GM12878 (cell line): ENCODE measurements at regions of chr21 and their contacts with region 1.

Region 1: DNA sequence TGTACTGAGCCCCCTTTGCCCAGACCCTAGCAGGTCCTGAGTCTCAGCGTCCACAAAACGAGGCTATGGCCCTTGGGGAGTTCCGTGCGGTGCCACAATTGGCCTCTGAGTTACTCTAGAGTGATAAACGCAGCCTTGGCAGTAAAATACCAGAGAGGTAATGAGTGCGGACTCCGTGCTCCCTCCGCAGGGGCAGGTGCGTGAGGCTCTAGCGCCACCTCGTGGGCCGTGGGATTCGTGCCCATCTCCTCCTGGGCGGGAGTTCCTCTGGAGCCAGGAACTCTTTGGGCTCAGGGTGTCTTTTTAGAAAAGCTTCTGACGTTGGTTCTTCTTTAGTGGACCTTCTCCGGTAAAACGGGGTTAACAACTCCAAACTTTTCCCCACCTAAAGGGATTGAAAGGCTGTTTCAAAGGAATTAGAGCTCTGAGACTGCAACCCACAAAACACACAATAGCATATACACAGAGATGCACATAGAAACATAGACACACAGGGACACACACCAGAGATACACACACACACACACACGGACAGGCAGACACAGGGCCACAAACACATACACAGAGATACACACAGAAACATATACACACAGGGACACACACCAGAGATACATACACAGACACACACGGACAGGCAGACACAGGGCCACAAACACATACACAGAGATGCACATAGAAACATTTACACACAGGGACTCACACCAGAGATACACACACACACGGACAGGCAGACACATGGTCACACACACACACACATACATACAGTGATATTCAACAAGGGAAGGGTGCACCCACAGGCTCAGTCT is 99.4 kb downstream of the KCNJ15 start:
- DNase-seq: peak; percentile 17
- ATAC-seq: peak; percentile 92
- H3K4me3 ChIP-seq: no peak overlapping the region
- H3K27ac ChIP-seq: no peak overlapping the region
- H3K4me1 ChIP-seq: no peaks in the 10 kb centered on the region; the same call in 1 of the 2 replicates
- H3K27me3 ChIP-seq: no peaks in the 10 kb centered on the region
- CTCF ChIP-seq: peak; percentile 75 to 98 (median 96)
- EP300 ChIP-seq: no peak
- POLR2A ChIP-seq: no peak
- RAD21 ChIP-seq: peak; percentile 93

Region 2: GRCh38 chr21:37700641-37701202 is 655.5 kb before region 1 on chr21:
- CTCF ChIA-PET with region 1: interaction called, 4 read pairs
- POLR2A ChIA-PET with region 1: no interaction called
- RAD21 ChIA-PET with region 1: interaction called, 3 read pairs
- SMC1A ChIA-PET with region 1: interaction called, 4 read pairs
- in situ Hi-C with region 1: loop called (anchors 5 kb)
- intact Hi-C with region 1: no loop called
- DNase-seq: peak; percentile 56
- ATAC-seq: peak; percentile 99
- H3K4me3 ChIP-seq: no peak overlapping the region
- H3K27ac ChIP-seq: no peak overlapping the region
- H3K4me1 ChIP-seq: no peaks in the 10 kb centered on the region; the same call in 1 of the 2 replicates
- H3K27me3 ChIP-seq: peaks cover 0 to 1% of the 10 kb centered on the region in 2 experiments; a peak in 1 of 4 replicates
- CTCF ChIP-seq: peak; percentile 59 to 66 (median 66)
- EP300 ChIP-seq: no peak
- POLR2A ChIP-seq: no peak
- RAD21 ChIP-seq: peak; percentile 62

Region 3: DNA sequence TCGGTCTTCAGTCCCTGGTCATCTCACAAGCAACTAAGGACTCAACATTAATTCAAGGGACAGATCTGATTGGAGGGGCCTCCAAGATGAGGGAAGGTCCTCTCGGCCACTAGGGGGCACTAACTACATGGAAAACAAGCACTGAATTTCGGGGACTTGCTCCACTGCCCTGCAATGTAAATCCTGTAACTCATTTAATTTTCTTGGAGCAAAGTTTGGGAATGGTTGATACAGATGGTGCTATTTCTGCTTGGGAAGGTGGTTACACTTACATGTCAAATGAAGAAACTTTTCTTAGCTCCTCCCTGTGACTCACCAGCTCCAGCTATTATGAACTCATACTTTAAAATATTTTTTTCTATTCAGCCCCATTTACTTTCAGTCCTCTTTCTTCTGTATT is 196.8 kb before region 1 on chr21:
- CTCF ChIA-PET with region 1: interaction called, 164 read pairs
- POLR2A ChIA-PET with region 1: no interaction called
- RAD21 ChIA-PET with region 1: interaction called, 32 read pairs
- SMC1A ChIA-PET with region 1: interaction called, 48 read pairs
- in situ Hi-C with region 1: no loop called
- intact Hi-C with region 1: loop called (anchors 1 kb)
- DNase-seq: peak; percentile 19
- ATAC-seq: peak; percentile 88
- H3K4me3 ChIP-seq: no peak overlapping the region
- H3K27ac ChIP-seq: no peak overlapping the region
- H3K4me1 ChIP-seq: no peaks in the 10 kb centered on the region
- H3K27me3 ChIP-seq: no peaks in the 10 kb centered on the region; a peak in 1 of 4 replicates
- CTCF ChIP-seq: peak; percentile 71 to 78 (median 74)
- EP300 ChIP-seq: no peak
- POLR2A ChIP-seq: no peak
- RAD21 ChIP-seq: peak; percentile 63

Region 4: DNA sequence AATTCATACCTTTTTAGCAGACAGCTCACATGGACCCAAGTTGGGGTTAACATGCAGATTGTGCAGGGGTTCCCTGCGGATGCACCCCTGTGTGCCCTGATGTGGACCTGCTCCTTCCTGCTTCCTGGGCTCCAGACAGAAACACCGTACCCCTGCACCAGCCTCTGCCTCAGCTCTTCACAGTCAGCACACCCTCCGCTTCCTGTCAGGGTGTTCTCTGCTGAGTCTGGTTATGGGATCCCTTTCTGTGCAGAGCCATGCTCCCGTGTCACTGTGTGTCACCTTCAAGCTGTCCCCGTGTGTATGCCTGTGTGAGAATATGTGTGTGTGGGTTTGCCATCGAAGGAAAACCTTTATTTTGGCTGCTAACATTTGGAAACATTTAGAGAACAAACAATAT is 148.1 kb before region 1 on chr21:
- CTCF ChIA-PET with region 1: interaction called, 15 read pairs
- POLR2A ChIA-PET with region 1: no interaction called
- RAD21 ChIA-PET with region 1: interaction called, 6 read pairs
- SMC1A ChIA-PET with region 1: interaction called, 9 read pairs
- in situ Hi-C with region 1: loop called (anchors 5 kb)
- intact Hi-C with region 1: no loop called
- DNase-seq: no peak
- ATAC-seq: no peak
- H3K4me3 ChIP-seq: no peak overlapping the region
- H3K27ac ChIP-seq: no peak overlapping the region
- H3K4me1 ChIP-seq: no peaks in the 10 kb centered on the region
- H3K27me3 ChIP-seq: no peaks in the 10 kb centered on the region; a peak in 1 of 4 replicates
- CTCF ChIP-seq: no peak
- EP300 ChIP-seq: no peak
- POLR2A ChIP-seq: no peak
- RAD21 ChIP-seq: no peak

Region 5: DNA sequence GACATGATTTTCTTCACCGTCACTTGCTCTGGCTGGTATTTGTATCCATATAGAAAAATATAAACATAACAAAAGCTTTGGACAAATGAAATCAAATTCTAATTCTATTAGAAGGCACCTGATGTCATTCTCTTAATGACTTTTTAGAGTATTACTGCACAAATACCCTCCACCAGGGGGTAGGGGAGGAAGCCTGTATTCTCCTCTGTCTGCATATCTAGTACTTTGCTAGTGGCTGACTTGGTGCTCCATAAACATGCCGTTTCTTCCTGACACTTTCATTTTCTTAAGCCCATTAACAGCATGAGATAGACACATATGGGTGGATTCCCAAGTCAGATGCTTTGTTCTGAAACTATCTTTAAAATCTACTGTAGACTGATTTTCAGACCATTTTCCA is 120.0 kb before region 1 on chr21:
- CTCF ChIA-PET with region 1: interaction called, 23 read pairs
- POLR2A ChIA-PET with region 1: no interaction called
- RAD21 ChIA-PET with region 1: interaction called, 6 read pairs
- SMC1A ChIA-PET with region 1: interaction called, 8 read pairs
- in situ Hi-C with region 1: no loop called
- intact Hi-C with region 1: no loop called
- DNase-seq: no peak
- ATAC-seq: peak; percentile 66
- H3K4me3 ChIP-seq: no peak overlapping the region
- H3K27ac ChIP-seq: no peak overlapping the region
- H3K4me1 ChIP-seq: no peaks in the 10 kb centered on the region; the same call in 1 of the 2 replicates
- H3K27me3 ChIP-seq: no peaks in the 10 kb centered on the region
- CTCF ChIP-seq: 0 out of 6 replicates have a peak, but pooled peaks of 1 of the 3 experiments have one; percentile 8
- EP300 ChIP-seq: no peak
- POLR2A ChIP-seq: no peak
- RAD21 ChIP-seq: no peak

Region 6: DNA sequence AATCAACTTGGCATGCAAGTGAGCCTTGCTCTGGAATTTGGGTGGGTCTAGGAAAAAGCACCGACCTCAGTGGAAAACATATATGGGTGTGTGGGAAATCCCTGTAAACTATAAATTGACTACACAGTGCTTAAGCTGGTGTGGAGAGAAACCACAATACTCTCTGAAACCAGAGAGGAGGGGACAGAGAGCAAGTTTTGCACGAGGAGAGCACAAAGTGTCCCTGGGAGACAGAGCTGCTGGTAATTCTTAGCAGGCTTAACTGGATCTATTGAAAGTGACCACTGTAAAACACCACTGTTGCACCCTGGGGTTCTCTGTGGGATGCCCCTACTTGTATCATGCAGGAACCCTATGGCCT is 86.6 kb before region 1 on chr21:
- CTCF ChIA-PET with region 1: interaction called, 42 read pairs
- POLR2A ChIA-PET with region 1: no interaction called
- RAD21 ChIA-PET with region 1: interaction called, 7 read pairs
- SMC1A ChIA-PET with region 1: interaction called, 17 read pairs
- in situ Hi-C with region 1: no loop called
- intact Hi-C with region 1: loop called (anchors 5 kb)
- DNase-seq: peak; percentile 87
- ATAC-seq: peak; percentile 94
- H3K4me3 ChIP-seq: peak overlapping the region; percentile 32; the same call in 1 of the 2 replicates
- H3K27ac ChIP-seq: peak overlapping the region; percentile 96
- H3K4me1 ChIP-seq: peaks cover 40% of the 10 kb centered on the region
- H3K27me3 ChIP-seq: no peaks in the 10 kb centered on the region
- CTCF ChIP-seq: no peak
- EP300 ChIP-seq: peak; percentile 76 to 79; a peak in 2 of 4 replicates
- POLR2A ChIP-seq: no peak
- RAD21 ChIP-seq: no peak

Region 7: GRCh38 chr21:38333301-38334272 is 22.6 kb before region 1 on chr21:
- CTCF ChIA-PET with region 1: interaction called, 27 read pairs
- POLR2A ChIA-PET with region 1: no interaction called
- RAD21 ChIA-PET with region 1: interaction called, 3 read pairs
- SMC1A ChIA-PET with region 1: interaction called, 5 read pairs
- in situ Hi-C with region 1: no loop called
- intact Hi-C with region 1: no loop called
- DNase-seq: no peak
- ATAC-seq: peak; percentile 73
- H3K4me3 ChIP-seq: no peak overlapping the region
- H3K27ac ChIP-seq: no peak overlapping the region
- H3K4me1 ChIP-seq: no peaks in the 10 kb centered on the region
- H3K27me3 ChIP-seq: no peaks in the 10 kb centered on the region
- CTCF ChIP-seq: peak in 2 of 3 experiments; percentile 31 to 32; a peak in 3 of 6 replicates
- EP300 ChIP-seq: no peak
- POLR2A ChIP-seq: no peak
- RAD21 ChIP-seq: peak; percentile 50

Region 8: DNA sequence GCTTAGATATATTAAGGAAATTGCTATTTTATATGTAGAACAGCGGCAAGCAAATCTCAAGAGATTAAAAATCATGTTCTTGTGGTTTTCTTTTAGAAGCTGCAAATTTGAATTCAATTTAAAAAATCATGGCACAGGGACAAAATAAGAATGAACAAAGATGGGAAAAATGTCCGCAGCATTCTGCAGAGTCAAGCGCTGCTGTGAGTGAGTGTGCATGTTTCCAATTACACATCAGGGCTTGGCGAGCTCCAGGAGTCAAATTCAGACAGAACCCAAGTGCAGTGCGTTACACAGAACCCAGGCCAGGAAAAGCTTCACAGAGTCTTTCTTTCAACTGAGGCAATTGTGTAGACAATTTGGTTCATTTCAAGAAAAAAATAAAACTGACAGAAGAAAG is 175.4 kb after region 1 on chr21:
- CTCF ChIA-PET with region 1: no interaction called
- POLR2A ChIA-PET with region 1: no interaction called
- RAD21 ChIA-PET with region 1: no interaction called
- SMC1A ChIA-PET with region 1: no interaction called
- in situ Hi-C with region 1: no loop called
- intact Hi-C with region 1: no loop called
- DNase-seq: no peak
- ATAC-seq: no peak
- H3K4me3 ChIP-seq: no peak overlapping the region
- H3K27ac ChIP-seq: no peak overlapping the region
- H3K4me1 ChIP-seq: no peaks in the 10 kb centered on the region
- H3K27me3 ChIP-seq: no peaks in the 10 kb centered on the region; a peak in 1 of 4 replicates
- CTCF ChIP-seq: no peak
- EP300 ChIP-seq: no peak
- POLR2A ChIP-seq: no peak
- RAD21 ChIP-seq: no peak